Activated T-helper 1 cell treated with anti-CD3 and anti-CD28 coated beads, Interleukin-12 subunit alpha, Interleukin-12 subunit beta, Interleukin-2, Interleukin-4 antibody, amounts not matched to agents 30 ng/mL and 10 ng/mL and 1 ng/mL, durations not matched to agents 14 hours and 24 hours and 36 hours (primary cell): ENCODE measurements at regions of chr6 and their contacts with region 1.

Region 1: DNA sequence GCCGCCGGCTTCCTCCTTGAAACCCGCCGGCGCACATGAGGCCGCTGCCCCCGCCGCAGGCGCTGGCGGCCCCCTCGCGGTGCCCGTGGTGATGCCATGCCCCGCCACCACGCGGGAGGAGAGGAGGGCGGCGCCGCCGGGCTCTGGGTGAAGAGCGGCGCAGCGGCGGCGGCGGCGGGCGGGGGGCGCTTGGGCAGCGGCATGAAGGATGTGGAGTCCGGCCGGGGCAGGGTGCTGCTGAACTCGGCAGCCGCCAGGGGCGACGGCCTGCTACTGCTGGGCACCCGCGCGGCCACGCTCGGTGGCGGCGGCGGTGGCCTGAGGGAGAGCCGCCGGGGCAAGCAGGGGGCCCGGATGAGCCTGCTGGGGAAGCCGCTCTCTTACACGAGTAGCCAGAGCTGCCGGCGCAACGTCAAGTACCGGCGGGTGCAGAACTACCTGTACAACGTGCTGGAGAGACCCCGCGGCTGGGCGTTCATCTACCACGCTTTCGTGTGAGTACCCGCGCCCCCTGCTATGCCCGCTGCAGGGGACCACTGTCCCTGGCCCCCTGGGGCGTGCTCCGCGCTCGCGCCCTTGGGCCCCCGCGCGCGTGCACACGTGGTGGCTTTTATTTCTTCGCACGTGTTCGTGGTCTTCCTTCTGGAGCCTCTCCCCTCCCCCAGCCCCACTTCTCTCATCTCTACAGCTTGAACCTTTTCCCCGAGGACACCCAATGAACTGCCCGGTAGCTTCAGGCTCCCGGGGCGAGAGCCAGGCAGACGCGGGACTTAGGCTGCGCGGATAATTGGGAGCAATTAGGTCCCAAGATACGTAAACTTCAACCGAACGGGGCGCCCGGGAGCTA is 453 bp downstream of the KCNQ5 start:
- DNase-seq: peak; percentile 31
- H3K4me3 Mint-ChIP-seq: peak overlapping the region; percentile 96
- H3K27ac Mint-ChIP-seq: peak overlapping the region; percentile 94
- H3K4me1 Mint-ChIP-seq: peaks cover 60% of the 10 kb centered on the region
- H3K27me3 Mint-ChIP-seq: peaks cover 5% of the 10 kb centered on the region

Region 2: GRCh38 chr6:72151742-72152141 is 470.6 kb before region 1 on chr6:
- intact Hi-C with region 1: no loop called
- DNase-seq: no peak
- H3K4me3 Mint-ChIP-seq: no peak overlapping the region
- H3K27ac Mint-ChIP-seq: no peak overlapping the region
- H3K4me1 Mint-ChIP-seq: no peaks in the 10 kb centered on the region
- H3K27me3 Mint-ChIP-seq: no peaks in the 10 kb centered on the region

Region 3: DNA sequence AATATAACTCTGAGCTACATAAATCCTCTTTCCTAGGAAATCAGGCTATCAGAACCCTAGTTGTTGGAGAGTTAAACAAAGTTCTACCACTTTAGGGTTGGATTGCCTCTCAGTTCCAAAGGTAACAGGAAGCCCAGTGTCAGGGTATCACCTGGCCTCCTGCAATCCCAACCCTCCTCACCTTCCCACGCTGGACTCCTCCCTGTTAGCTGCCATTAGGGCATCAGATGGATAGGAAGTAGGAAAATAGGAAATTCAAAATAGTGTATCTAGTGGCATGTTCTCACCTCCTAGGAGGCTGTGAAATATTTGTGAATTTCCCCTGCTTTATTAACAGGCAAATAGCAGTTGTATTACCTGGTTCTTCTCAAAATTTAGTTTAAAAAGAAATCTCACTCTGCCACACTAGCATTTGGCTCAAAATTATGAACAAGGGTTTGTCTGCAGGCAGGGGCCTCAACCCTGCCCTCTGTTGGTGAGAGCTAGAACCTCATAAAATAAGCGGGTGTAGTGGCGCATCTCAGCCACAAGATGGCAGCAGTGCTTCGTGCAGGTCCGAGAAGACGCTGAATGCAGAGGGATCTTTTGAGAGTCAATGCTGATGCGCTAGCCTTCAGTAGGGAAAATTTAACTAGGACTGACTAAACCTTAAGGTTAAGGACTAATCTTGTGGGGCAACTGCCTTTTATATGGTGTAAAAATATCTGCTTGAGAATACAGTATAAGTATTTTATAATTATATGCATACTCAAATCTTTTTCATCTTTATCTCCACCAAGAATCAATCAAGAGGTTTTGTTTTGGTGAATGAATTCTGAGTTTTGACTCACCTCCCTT is 210.2 kb before region 1 on chr6:
- intact Hi-C with region 1: loop called (anchors 1 kb)
- DNase-seq: peak; percentile 70
- H3K4me3 Mint-ChIP-seq: no peak overlapping the region
- H3K27ac Mint-ChIP-seq: no peak overlapping the region
- H3K4me1 Mint-ChIP-seq: no peaks in the 10 kb centered on the region
- H3K27me3 Mint-ChIP-seq: peaks cover 13% of the 10 kb centered on the region

Region 4: GRCh38 chr6:72476051-72476450 is 146.3 kb before region 1 on chr6:
- intact Hi-C with region 1: no loop called
- DNase-seq: no peak
- H3K4me3 Mint-ChIP-seq: no peak overlapping the region
- H3K27ac Mint-ChIP-seq: no peak overlapping the region
- H3K4me1 Mint-ChIP-seq: no peaks in the 10 kb centered on the region
- H3K27me3 Mint-ChIP-seq: no peaks in the 10 kb centered on the region

Region 5: DNA sequence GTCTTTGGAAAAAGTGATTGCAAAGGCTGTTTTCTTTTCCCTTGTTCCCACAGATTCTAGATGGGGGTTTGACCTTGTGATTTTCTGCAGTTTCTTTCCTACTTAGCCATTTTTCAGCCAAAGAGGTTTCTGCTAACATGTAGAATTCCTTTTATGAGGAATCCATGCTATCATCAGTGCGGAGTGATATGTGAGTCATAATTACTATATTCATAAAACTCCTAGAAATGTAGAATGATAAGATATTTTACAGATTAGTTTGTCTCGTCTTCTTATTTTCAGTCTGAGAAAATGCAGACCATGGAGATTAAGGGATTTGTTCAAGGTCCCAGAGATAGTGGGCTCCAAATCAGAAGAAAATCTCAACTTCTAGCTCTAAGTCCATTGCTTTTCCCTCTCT is 98.1 kb after region 1 on chr6:
- intact Hi-C with region 1: no loop called
- DNase-seq: no peak
- H3K4me3 Mint-ChIP-seq: no peak overlapping the region
- H3K27ac Mint-ChIP-seq: no peak overlapping the region
- H3K4me1 Mint-ChIP-seq: no peaks in the 10 kb centered on the region
- H3K27me3 Mint-ChIP-seq: no peaks in the 10 kb centered on the region

Region 6: DNA sequence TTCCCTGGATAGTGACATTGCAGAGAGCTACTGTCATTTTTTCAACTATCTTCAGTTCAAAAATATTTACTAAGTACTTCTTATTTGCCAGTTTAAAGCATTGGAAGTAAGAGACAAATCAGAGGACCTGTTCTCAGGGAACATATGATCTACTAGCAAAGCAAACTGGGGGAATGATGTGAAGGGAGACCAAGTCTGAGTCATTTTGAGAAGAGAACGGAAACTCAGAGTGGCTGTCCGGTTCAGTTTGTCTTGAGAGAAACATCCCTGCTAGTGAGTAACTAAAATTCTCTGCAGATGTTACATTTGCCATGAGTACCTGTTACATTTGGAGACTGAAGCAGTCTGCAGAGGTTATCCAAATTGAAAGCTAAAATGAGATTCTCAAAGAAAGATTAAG is 117.8 kb after region 1 on chr6:
- intact Hi-C with region 1: loop called (anchors 2 kb)
- DNase-seq: no peak
- H3K4me3 Mint-ChIP-seq: no peak overlapping the region
- H3K27ac Mint-ChIP-seq: no peak overlapping the region
- H3K4me1 Mint-ChIP-seq: peaks cover 36% of the 10 kb centered on the region
- H3K27me3 Mint-ChIP-seq: peaks cover 2% of the 10 kb centered on the region

Region 7: GRCh38 chr6:73262671-73263569 is 640.6 kb after region 1 on chr6 and contains the start of gene KHDC1:
- intact Hi-C with region 1: loop called (anchors 2 kb)
- DNase-seq: peak; percentile 57
- H3K4me3 Mint-ChIP-seq: peak within 1 kb of the TSS; percentile 84
- H3K27ac Mint-ChIP-seq: peak within 1 kb of the TSS; percentile 75
- H3K4me1 Mint-ChIP-seq: peaks cover 38% of the 10 kb centered on the region
- H3K27me3 Mint-ChIP-seq: no peaks in the 10 kb centered on the region
- total RNA-seq, gene KHDC1: 4.8 and 6.4 TPM in 2 replicates

Region 8: GRCh38 chr6:73388800-73389512 is 766.6 kb after region 1 on chr6:
- intact Hi-C with region 1: loop called (anchors 5 kb)
- DNase-seq: peak; percentile 51
- H3K4me3 Mint-ChIP-seq: peak overlapping the region; percentile 75
- H3K27ac Mint-ChIP-seq: peak overlapping the region; percentile 74
- H3K4me1 Mint-ChIP-seq: peaks cover 19% of the 10 kb centered on the region
- H3K27me3 Mint-ChIP-seq: peaks cover 3% of the 10 kb centered on the region

Region 9: DNA sequence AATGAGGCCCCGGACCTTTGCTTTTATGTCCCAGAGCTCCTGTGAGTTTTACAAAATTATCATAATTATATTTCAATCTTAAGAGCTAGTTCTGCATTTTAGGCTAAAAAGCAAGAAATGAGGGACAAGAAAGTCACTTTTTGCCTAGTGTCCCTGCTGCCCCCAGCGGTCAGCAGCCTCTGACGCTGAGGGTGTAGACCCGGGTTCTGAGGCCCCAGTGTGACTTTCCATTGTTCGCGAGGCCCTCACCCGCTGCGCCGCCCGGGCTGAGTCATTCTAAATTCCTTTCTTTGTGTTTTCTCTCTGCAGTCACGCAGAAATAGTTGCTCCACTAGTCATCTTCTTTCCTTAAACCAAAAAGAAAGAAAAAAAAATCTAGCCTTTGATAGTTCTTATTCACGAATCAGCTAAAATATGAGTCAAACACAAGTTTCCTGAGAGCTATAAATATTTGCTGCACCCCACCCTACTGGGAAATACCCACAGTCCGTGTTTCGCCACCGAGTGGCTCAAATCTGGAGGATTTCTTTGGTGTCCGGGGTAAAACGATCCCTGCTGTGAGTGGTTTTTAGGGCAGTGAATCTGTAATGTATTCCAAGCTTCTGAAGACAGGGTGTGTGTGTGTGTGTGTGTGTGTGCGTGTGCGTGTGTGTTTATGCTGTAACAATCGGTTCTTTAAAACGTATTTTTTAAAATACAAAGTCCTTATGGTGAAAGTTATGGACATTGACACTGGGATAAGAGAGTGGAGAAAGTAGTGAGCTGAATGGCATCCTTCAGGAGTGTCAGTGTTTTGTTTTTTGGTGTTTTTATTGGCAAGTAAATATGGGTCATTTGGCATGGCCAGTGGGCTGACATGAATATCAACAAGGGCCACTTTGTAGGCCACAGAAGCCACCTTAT is 958.2 kb after region 1 on chr6:
- intact Hi-C with region 1: loop called (anchors 10 kb)
- DNase-seq: peak; percentile 47
- H3K4me3 Mint-ChIP-seq: peak overlapping the region; percentile 69
- H3K27ac Mint-ChIP-seq: peak overlapping the region; percentile 95
- H3K4me1 Mint-ChIP-seq: peaks cover 27% of the 10 kb centered on the region
- H3K27me3 Mint-ChIP-seq: no peaks in the 10 kb centered on the region

Region 10: DNA sequence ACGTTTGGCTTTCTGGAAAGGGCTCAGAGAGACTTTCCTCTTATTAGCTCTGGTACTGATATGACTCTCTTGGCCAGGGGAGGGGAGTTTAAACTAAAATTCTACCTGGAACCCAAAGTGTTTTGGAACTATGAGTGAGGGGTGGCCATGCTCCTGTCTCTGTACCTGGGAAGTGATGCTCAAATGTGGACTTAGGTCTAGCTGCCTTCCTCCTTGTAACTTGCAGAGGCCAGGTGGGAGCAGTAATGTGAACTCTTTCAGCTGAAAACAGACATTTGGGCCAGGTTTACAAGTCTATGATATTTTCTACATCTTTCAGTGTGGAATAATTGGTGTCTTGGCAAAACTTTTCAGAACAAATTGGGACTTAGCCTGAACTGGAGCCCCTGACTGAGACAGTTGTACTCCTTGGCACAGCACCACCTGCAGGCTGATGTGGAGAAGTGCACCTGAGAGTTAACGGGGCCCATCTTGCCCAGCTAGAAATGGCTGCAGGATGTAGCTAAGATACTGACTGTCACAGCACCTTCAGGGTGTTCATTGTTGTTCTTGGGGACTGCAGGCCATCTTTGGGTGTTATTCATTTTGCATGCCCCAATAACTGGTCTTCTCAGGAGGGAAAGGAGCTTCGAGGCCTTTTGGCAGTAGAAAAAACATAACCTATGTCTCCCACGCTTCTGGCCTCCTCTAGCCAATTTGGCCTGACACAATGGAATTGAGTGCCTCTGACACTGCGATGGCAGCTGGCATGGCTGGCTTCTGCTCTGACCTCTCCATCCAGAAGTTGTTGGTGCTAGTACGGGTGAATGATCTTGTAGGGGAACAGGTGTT is 1110.7 kb after region 1 on chr6:
- intact Hi-C with region 1: loop called (anchors 5 kb)
- DNase-seq: peak; percentile 61
- H3K4me3 Mint-ChIP-seq: no peak overlapping the region
- H3K27ac Mint-ChIP-seq: peak overlapping the region; percentile 34
- H3K4me1 Mint-ChIP-seq: peaks cover 46% of the 10 kb centered on the region
- H3K27me3 Mint-ChIP-seq: no peaks in the 10 kb centered on the region